ENCODE measurements at regions of chr17 and their contacts with region 1.

Region 1: DNA sequence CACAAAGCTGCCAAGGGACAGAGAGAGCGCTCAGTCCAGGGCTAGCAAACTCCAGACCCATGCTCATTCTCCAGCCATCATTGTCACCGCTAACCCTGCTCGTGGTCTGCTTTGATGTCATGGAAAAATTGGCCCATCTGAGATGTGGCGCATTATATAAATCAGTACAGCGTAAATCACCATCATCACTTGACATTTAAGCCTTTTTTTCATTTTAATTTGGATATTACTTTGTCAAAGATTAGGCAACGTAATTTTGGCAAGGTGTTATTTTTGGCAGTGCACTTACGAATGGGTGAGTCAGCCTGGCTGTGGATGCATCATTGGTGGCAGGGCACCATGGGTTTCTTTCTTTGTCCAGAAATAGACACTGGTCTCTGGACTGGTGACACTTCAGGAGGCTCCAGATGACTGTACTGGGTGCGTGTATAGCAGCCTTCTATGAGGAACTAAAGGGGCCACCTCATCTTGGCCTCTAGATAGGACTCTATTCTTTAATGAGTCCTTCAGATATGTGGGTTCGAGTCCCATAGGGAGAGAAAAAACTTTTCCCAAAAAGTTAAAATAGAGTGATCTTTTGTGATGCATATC is 166.3 kb downstream of the MSI2 start:
- DNase-seq: peak in 1 of 2 donors; percentile 59
- ATAC-seq: peak; percentile 60
- H3K4me3 ChIP-seq: no peak overlapping the region
- H3K27ac ChIP-seq: no peak overlapping the region
- H3K4me1 ChIP-seq: no peaks in the 10 kb centered on the region
- H3K27me3 ChIP-seq: no peaks in the 10 kb centered on the region

Region 2: DNA sequence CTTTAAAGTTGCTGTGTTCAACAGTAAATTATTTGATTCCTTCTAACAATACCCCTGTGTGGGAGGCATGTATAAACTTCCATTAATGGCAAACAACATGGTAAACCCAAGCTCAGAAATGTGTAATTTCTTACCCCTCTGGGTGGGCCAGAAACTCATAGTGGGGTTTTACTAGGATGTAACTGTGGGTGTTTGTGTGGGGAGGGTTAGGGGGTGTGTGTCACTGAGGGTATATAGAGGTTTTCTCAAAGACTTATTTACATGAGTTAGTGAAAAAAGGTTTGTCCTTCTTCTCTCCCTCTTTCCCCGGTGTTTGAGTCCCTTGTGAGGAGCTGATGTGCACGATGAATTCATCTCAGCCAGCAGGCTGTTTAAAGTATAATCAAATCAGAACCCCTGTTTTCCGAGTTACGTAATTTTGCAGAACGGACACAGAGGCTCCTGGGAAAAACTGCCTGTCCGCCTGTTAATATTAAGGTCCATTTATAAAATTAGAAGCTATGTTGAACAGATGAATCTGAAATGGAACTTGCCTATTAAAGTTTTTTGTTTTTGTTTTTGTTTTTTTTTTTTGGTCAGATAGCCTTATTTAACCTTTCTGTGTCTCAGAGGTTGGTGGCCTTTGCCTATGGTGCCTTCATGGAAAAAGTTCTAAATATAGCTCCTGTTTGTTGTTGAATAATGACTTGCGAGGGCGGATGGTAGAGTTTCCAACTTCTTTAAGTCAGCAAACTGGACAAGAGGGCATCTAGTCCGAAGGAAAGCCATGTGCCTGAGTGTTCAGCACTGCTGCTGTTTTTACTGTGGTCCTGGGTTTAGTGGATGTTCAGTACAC is 93.1 kb before region 1 on chr17:
- intact Hi-C with region 1: loop called in 1 of 2 experiments (anchors 10 kb)
- DNase-seq: no peak
- ATAC-seq: no peak
- H3K4me3 ChIP-seq: no peak overlapping the region
- H3K27ac ChIP-seq: no peak overlapping the region
- H3K4me1 ChIP-seq: no peaks in the 10 kb centered on the region
- H3K27me3 ChIP-seq: no peaks in the 10 kb centered on the region

Region 3: DNA sequence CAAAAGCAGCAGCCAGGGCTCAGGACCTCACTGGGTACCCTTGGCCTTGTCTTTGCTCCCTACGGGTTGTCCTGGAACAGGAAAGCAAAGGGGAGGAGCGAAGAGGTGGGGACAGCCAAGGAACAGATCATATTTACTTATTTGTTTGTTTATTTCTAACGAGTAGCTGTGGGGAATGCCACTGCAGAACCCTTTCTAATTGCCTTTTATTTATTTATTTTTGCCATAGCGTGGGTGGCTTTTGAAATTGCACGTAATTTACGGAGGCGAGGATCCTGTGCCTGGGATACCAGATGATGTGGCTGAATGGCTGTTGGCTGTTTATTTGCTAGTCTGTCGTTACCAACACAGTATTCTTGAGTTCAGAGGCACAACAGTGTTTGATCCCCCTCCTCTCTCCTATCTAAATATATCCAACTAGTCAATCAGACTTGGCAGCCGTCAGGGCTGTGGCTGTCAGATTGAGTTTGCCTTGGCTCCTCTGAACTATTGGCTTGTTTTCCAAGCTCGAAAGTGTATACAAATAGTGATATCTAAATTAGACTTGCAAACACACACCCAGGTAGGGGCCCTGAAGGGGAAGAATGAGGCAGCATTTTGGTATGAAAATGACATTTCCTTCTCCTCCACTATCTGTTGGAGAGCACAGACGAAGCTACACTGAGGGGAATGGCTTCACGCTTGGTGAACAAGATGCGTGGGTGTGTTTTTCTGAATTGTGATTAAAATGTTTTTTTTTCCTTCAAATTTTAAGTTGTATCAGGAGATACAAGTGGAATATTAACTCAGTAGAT is 55.9 kb before region 1 on chr17:
- intact Hi-C with region 1: loop called in 1 of 2 experiments (anchors 5 kb)
- DNase-seq: no peak
- ATAC-seq: no peak
- H3K4me3 ChIP-seq: no peak overlapping the region
- H3K27ac ChIP-seq: no peak overlapping the region
- H3K4me1 ChIP-seq: no peaks in the 10 kb centered on the region
- H3K27me3 ChIP-seq: no peaks in the 10 kb centered on the region

Measured in aorta (tissue), 5 donors.